HepG2 (cell line): ENCODE measurements at regions of chr2 and their contacts with region 1.

Region 1: DNA sequence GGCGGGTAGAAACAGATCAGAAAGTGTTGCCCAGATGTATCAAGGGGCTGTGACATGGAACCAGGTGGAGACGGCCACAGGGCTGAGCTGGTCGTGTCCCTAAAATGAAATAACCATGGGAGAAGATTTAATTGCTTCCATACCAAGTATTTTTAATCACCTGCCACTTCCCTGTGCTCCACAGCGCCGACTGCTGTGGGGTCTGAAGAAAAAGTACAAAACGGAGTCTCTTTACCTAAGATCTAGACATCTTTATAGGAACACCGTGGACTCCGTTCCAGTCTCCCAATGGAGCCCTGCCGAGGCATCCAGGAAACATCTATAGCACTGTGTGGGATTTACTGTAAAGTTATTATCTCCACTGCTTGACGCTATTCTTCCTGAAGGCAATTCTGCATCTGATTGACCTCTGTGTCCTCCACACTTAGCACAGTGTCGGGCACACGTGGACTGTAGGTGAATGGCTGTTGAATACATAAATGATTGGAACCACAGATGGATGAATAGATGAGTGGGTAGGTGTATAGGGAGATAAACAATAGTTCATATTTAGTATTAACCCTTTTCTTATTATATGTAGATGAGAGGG is 21.6 kb upstream of the GYPC start:
- DNase-seq: no peak
- ATAC-seq: peak; percentile 60
- H3K4me3 ChIP-seq: no peak overlapping the region
- H3K27ac ChIP-seq: no peak overlapping the region
- H3K4me1 ChIP-seq: no peaks in the 10 kb centered on the region
- H3K27me3 ChIP-seq: peaks cover 0 to 18% of the 10 kb centered on the region in 2 experiments; a peak in 1 of 5 replicates
- CTCF ChIP-seq: peak; percentile 62
- EP300 ChIP-seq: no peak
- POLR2A ChIP-seq: no peak
- RAD21 ChIP-seq: no peak

Region 2: DNA sequence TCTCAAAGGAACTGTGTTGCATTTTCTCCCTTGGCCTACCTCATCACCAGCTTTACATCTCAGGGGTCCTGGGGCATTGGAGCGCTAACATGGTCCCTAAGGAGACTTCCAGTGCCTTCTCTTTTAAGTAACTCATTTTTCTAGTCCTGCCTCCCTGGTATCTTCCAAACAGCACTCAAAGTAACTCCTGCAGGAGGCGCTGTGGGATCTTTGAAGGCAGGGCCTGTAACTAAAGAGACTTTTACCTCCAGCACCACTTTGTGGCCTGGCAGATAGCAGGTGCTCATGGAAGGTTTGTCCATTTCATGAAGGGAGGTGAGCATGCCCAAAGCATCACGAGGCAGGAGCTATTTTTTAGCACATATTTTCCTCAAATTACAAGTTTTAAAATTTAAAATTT is 389.4 kb before region 1 on chr2:
- CTCF ChIA-PET with region 1: interaction called, 5 read pairs
- POLR2A ChIA-PET with region 1: no interaction called
- in situ Hi-C with region 1: loop called (anchors 25 kb)
- intact Hi-C with region 1: no loop called
- DNase-seq: peak; percentile 61
- ATAC-seq: peak; percentile 96
- H3K4me3 ChIP-seq: no peak overlapping the region
- H3K27ac ChIP-seq: no peak overlapping the region
- H3K4me1 ChIP-seq: no peaks in the 10 kb centered on the region
- H3K27me3 ChIP-seq: no peaks in the 10 kb centered on the region
- CTCF ChIP-seq: peak; percentile 75
- EP300 ChIP-seq: no peak
- POLR2A ChIP-seq: no peak
- RAD21 ChIP-seq: peak; percentile 68

Region 3: DNA sequence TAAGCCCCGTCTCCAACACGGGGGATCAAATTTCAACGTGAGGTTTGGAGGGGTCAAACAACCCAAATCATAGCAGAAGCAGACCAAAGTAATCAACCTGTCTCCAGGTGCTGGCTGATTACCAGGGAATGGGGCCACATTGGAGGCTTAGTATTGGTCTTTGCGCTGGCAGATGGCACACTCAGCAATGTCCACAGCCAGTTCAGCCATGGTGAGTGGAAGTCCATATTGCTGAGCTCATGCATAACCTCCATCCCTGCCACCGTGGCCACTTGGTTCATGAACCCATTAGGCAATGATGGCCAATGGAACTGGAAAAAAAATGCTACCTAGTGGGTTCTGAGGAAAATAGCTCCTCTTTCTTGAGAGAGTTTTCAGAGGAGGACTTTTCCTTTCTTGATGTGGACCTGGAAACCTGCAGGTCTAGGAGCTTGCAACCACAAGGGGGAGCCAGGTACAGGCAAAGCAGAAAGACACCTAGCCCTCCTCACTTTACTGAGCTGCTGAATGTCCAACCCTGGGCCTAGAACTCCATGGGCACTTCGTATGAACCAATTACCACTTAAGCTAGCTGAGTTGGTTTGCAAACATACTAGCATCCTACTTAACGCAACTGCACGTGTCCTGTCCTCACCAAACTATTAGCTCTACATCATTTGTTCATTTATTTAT is 106.4 kb before region 1 on chr2:
- CTCF ChIA-PET with region 1: no interaction called
- POLR2A ChIA-PET with region 1: no interaction called
- in situ Hi-C with region 1: no loop called
- intact Hi-C with region 1: loop called (anchors 5 kb)
- DNase-seq: peak; percentile 50
- ATAC-seq: peak; percentile 96
- H3K4me3 ChIP-seq: no peak overlapping the region
- H3K27ac ChIP-seq: no peak overlapping the region
- H3K4me1 ChIP-seq: no peaks in the 10 kb centered on the region
- H3K27me3 ChIP-seq: no peaks in the 10 kb centered on the region
- CTCF ChIP-seq: peak; percentile 61
- EP300 ChIP-seq: no peak
- POLR2A ChIP-seq: no peak
- RAD21 ChIP-seq: peak; percentile 74

Region 4: GRCh38 chr2:126614524-126615227 is 19.7 kb before region 1 on chr2:
- CTCF ChIA-PET with region 1: no interaction called
- POLR2A ChIA-PET with region 1: no interaction called
- in situ Hi-C with region 1: no loop called
- intact Hi-C with region 1: no loop called
- DNase-seq: no peak
- ATAC-seq: no peak
- H3K4me3 ChIP-seq: no peak overlapping the region
- H3K27ac ChIP-seq: no peak overlapping the region
- H3K4me1 ChIP-seq: no peaks in the 10 kb centered on the region
- H3K27me3 ChIP-seq: no peaks in the 10 kb centered on the region
- CTCF ChIP-seq: no peak
- EP300 ChIP-seq: no peak
- POLR2A ChIP-seq: no peak
- RAD21 ChIP-seq: no peak

Region 5: DNA sequence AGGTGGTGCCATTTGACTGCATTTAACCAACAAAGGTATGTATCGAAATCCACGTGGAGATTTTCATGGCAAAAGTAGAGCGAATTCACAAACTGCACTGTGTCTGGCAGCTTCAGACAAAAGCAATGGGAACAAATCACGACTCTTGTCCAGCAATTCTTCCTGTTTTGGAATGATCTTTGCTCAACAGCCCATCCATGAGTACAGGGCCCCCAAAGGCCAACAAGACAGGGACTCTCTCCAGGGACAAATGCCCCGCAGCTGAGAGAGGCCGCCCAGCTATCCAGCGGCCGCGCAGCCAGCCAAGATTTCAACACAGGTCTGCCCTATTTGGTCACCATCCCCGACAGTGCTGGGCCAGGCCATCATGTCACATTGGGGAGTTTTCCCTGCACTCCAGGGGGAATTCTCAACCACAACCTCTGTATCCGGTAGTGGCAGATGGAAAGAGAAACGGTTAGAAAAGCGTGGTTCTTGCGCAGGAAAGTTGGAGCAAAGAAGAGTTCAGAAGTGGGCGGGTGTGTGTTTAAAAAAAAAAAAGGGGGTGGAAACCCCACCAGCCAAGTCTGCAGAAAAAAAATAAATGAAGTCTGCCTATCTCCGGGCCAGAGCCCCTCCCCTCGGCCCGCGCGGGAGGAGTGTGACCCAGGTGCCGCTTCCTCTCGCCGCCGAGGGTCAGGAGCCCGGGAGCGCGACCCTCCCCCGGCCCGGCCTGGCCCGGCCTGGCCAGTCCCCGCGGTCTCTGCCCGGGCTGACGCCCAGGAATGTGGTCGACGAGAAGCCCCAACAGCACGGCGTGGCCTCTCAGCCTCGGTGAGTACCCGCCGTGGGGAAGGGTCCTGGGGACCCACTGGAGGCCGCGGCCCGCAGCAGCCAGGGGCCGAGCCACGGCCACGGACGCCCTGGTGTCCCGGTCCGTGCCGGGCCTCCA is 21.4 kb after region 1 on chr2 and contains the start of gene GYPC:
- CTCF ChIA-PET with region 1: no interaction called
- POLR2A ChIA-PET with region 1: no interaction called
- in situ Hi-C with region 1: no loop called
- intact Hi-C with region 1: no loop called
- DNase-seq: no peak
- ATAC-seq: peak; percentile 70
- H3K4me3 ChIP-seq: peak within 1 kb of the TSS in 1 of 3 experiments; percentile 12; a peak in 1 of 6 replicates
- H3K27ac ChIP-seq: no peak within 1 kb of the TSS
- H3K4me1 ChIP-seq: no peaks in the 10 kb centered on the region
- H3K27me3 ChIP-seq: peaks cover 6 to 58% of the 10 kb centered on the region in 2 experiments
- CTCF ChIP-seq: no peak
- EP300 ChIP-seq: no peak
- POLR2A ChIP-seq: no peak
- RAD21 ChIP-seq: no peak
- total RNA-seq, gene GYPC: not detected in 2 replicates

Region 6: GRCh38 chr2:126719833-126720351 is 85.5 kb after region 1 on chr2:
- CTCF ChIA-PET with region 1: no interaction called
- POLR2A ChIA-PET with region 1: no interaction called
- in situ Hi-C with region 1: no loop called
- intact Hi-C with region 1: no loop called
- DNase-seq: no peak
- ATAC-seq: no peak
- H3K4me3 ChIP-seq: no peak overlapping the region
- H3K27ac ChIP-seq: no peak overlapping the region
- H3K4me1 ChIP-seq: no peaks in the 10 kb centered on the region
- H3K27me3 ChIP-seq: peaks cover 0 to 30% of the 10 kb centered on the region in 2 experiments; a peak in 2 of 5 replicates
- CTCF ChIP-seq: no peak
- EP300 ChIP-seq: no peak
- POLR2A ChIP-seq: no peak
- RAD21 ChIP-seq: no peak